ENCODE measurements at regions of chr12 and their contacts with region 1.

Region 1: GRCh38 chr12:30088259-30088995 is 304.7 kb upstream of the TMTC1 start:
- DNase-seq: no peak
- ATAC-seq: no peak
- H3K4me3 ChIP-seq: no peak overlapping the region
- H3K4me3 Mint-ChIP-seq: no peak overlapping the region
- H3K27ac ChIP-seq: no peak overlapping the region
- H3K27ac Mint-ChIP-seq: no peak overlapping the region
- H3K4me1 ChIP-seq: no peaks in the 10 kb centered on the region
- H3K4me1 Mint-ChIP-seq: no peaks in the 10 kb centered on the region
- H3K27me3 ChIP-seq: no peaks in the 10 kb centered on the region
- H3K27me3 Mint-ChIP-seq: no peaks in the 10 kb centered on the region
- CTCF ChIP-seq: no peak

Region 2: GRCh38 chr12:30120522-30120921 is 32.1 kb after region 1 on chr12:
- CTCF ChIA-PET with region 1: no interaction called
- POLR2A ChIA-PET with region 1: no interaction called
- intact Hi-C with region 1: loop called in 1 of 2 experiments (anchors 1 kb)
- DNase-seq: no peak
- ATAC-seq: no peak
- H3K4me3 ChIP-seq: no peak overlapping the region
- H3K4me3 Mint-ChIP-seq: no peak overlapping the region
- H3K27ac ChIP-seq: no peak overlapping the region
- H3K27ac Mint-ChIP-seq: no peak overlapping the region
- H3K4me1 ChIP-seq: no peaks in the 10 kb centered on the region
- H3K4me1 Mint-ChIP-seq: no peaks in the 10 kb centered on the region
- H3K27me3 ChIP-seq: no peaks in the 10 kb centered on the region
- H3K27me3 Mint-ChIP-seq: no peaks in the 10 kb centered on the region
- CTCF ChIP-seq: no peak